Posterior vena cava (tissue), 2 donors: ENCODE measurements at regions of chr1 and their contacts with region 1.

Region 1: DNA sequence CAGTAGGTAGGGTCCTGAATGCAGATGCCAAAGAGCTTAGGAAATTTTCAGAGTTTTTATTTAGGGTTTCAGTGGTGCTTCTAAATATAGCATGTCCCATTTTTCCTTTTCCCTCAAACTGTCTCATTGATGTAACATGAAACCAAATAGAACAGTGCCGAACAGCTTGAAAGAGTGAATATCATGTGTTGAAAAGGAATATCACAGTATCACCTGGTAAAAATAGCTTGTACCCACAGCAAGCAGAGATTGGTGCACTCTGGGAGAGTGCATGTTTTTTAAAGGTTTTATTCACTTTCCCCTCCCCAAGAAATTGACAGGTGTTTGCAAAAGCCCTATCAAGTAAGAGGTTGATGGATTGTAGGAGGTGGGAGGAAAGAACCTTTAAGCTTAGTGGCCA is 41.9 kb upstream of the ELAVL4 start:
- DNase-seq: no peak

Region 2: GRCh38 chr1:50368179-50369012 is 301.6 kb after region 1 on chr1:
- intact Hi-C with region 1: no loop called
- DNase-seq: no peak

Region 3: GRCh38 chr1:50393522-50394120 is 326.8 kb after region 1 on chr1:
- intact Hi-C with region 1: no loop called
- DNase-seq: no peak

Region 4: DNA sequence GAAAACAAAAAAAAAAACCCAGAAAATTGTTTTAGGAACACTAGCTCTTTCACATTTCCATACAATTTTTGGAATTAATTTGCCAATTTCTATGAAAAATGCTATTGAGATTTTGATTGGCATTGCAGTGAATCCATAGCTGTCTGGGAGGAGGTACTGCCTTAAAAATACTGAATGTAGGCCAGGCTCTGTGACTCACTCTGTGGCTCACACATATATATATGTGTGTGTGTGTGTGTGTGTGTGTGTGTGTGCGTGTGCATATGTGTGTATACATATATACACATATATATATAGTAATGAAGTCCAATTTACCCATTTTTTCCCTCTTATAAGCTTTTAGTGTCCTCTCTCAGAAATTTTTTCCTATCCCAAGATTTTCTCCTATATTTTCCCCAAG is 570.7 kb after region 1 on chr1:
- intact Hi-C with region 1: loop called in 1 of 2 experiments (anchors 5 kb)
- DNase-seq: no peak